Ovary (tissue), 10 donors: ENCODE measurements at regions of chr4 and their contacts with region 1.

Region 1: GRCh38 chr4:83284193-83285054 is at the start of gene COQ2:
- DNase-seq: peak; percentile 96 to 98 (median 97)
- H3K4me3 ChIP-seq: peak within 1 kb of the TSS; percentile 52
- H3K27ac ChIP-seq: peak within 1 kb of the TSS; percentile 94 to 98
- H3K4me1 ChIP-seq: no peaks in the 10 kb centered on the region
- H3K27me3 ChIP-seq: no peaks in the 10 kb centered on the region
- CTCF ChIP-seq: peak; percentile 44 to 90 (median 84)
- EP300 ChIP-seq: no peak
- POLR2A ChIP-seq: peak; percentile 75
- total RNA-seq, gene COQ2: 8.4 to 12.3 (median 9.5) TPM

Region 2: GRCh38 chr4:82462415-82462831 is 822.0 kb before region 1 on chr4:
- intact Hi-C with region 1: loop called in 1 of 4 experiments (anchors 10 kb)
- DNase-seq: peak; percentile 88 to 96 (median 94)
- H3K4me3 ChIP-seq: no peak overlapping the region
- H3K27ac ChIP-seq: peak overlapping the region in 1 of 2 donors; percentile 36
- H3K4me1 ChIP-seq: no peaks in the 10 kb centered on the region
- H3K27me3 ChIP-seq: no peaks in the 10 kb centered on the region
- CTCF ChIP-seq: peak; percentile 50 to 75 (median 70)
- EP300 ChIP-seq: no peak
- POLR2A ChIP-seq: no peak

Region 3: GRCh38 chr4:83034630-83035494 is 249.6 kb before region 1 on chr4 and contains the start of gene COPS4:
- intact Hi-C with region 1: loop called in 1 of 4 experiments (anchors 10 kb)
- DNase-seq: peak; percentile 93 to 97 (median 95)
- H3K4me3 ChIP-seq: peak within 1 kb of the TSS; percentile 87
- H3K27ac ChIP-seq: peak within 1 kb of the TSS; percentile 56 to 85
- H3K4me1 ChIP-seq: peaks cover 5% of the 10 kb centered on the region
- H3K27me3 ChIP-seq: no peaks in the 10 kb centered on the region
- CTCF ChIP-seq: peak; percentile 62 to 69 (median 67)
- EP300 ChIP-seq: no peak
- POLR2A ChIP-seq: peak; percentile 5
- total RNA-seq, gene COPS4: 30.7 to 43.2 (median 34.1) TPM

Region 4: DNA sequence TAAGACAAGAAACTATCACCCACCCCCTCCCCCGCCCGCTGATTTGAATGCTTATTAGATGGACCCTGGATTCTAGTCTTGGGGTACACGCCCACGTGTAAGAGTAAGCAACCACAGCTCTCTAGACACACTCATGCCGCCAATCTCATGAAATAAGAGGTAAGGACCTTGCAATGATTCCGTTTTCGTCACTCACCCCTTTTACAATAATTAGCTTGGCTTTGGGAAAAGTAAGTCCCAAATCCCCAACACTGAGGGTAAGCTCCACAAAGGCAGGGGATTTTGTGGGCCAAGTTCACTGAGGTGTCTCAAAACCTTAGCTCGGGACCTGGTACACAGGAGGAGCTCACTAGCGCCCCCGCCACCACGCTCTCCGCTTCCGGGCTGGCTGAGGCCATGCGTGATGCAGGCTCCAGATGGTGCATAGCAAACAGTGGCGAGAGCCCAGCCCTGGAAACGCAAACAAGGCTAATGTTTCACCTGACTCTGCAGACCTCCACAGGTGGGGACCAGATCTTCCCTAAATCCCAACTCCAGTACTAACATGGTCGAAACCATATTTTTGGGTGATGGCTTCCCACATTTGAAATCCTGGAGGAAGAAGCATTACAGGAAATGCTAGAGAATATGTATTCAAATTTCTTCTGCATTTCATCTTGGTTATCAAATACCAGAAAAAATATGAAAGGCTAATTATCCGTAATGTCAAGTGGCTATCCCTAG is 174.0 kb before region 1 on chr4:
- intact Hi-C with region 1: no loop called
- DNase-seq: peak; percentile 70 to 85 (median 72)
- H3K4me3 ChIP-seq: peak overlapping the region; percentile 35
- H3K27ac ChIP-seq: no peak overlapping the region
- H3K4me1 ChIP-seq: no peaks in the 10 kb centered on the region
- H3K27me3 ChIP-seq: no peaks in the 10 kb centered on the region
- CTCF ChIP-seq: peak in 1 of 3 donors; percentile 27
- EP300 ChIP-seq: no peak
- POLR2A ChIP-seq: no peak

Region 5: DNA sequence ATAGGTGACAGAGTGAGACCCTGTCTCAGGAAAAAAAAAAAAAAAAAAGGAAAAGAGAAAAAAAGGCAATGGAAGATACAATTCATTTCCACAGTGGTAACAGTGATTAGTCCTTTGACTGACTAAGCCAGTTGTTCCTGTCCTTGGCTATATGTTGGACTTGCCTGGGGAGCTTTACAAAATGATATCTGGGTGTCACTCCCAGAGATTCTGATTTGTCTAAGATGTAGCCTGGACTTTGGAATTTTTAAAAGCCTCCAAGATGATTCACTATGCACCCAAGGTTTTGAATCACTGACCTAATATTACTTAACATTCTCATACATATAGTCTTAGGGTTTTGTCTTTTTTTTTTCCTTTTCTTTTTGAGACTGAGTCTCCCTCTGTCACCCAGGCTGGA is 154.3 kb after region 1 on chr4:
- intact Hi-C with region 1: loop called in 1 of 4 experiments (anchors 10 kb)
- DNase-seq: no peak
- H3K4me3 ChIP-seq: no peak overlapping the region
- H3K27ac ChIP-seq: no peak overlapping the region
- H3K4me1 ChIP-seq: no peaks in the 10 kb centered on the region
- H3K27me3 ChIP-seq: no peaks in the 10 kb centered on the region
- CTCF ChIP-seq: no peak
- EP300 ChIP-seq: no peak
- POLR2A ChIP-seq: no peak

Region 6: GRCh38 chr4:83455281-83456129 is 171.1 kb after region 1 on chr4 and contains the starts of genes HELQ and MRPS18C:
- intact Hi-C with region 1: loop called in 1 of 4 experiments (anchors 10 kb)
- DNase-seq: peak; percentile 95 to 98 (median 97)
- H3K4me3 ChIP-seq: peak within 1 kb of the TSS; percentile 84
- H3K27ac ChIP-seq: peak within 1 kb of the TSS; percentile 96 to 97
- H3K4me1 ChIP-seq: peaks cover 7% of the 10 kb centered on the region
- H3K27me3 ChIP-seq: no peaks in the 10 kb centered on the region
- CTCF ChIP-seq: peak in 2 of 3 donors; percentile 32 to 40
- EP300 ChIP-seq: no peak
- POLR2A ChIP-seq: peak; percentile 89
- total RNA-seq, gene HELQ: 17.2 to 30.8 (median 22.7) TPM
- total RNA-seq, gene MRPS18C: 13.0 to 47.5 (median 35.7) TPM

Region 7: DNA sequence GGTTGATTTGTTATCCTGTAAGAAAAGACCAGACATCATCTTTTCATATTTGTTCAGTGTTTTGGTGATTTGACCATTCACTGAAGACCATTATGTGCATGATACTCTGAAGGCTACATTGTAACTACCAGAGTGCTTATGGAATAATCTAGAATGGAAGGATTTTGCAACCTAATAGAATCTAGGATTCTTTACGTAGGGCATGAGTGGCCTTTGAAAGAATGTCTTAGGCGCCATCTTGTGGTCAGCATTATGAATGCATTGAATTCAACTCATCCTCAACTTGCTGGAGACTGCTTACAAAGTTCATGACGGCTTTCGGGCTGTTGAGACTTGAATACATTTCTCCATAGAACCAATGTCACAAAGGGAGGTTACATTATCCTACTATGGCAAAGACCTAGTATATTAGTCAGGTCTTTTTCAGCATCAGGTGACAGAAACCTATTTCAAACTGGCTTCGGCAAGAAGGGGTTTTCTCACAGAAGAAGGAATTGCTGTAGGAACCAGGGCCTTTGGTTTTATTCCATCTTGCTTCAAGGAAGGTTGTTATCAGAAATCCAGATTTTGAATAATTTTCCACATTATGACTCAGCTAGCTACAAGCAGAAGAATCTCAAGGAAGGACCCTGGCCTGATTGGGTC is 355.5 kb after region 1 on chr4:
- intact Hi-C with region 1: loop called in 1 of 4 experiments (anchors 5 kb)
- DNase-seq: peak in 3 of 5 donors; percentile 23 to 71 (median 44)
- H3K4me3 ChIP-seq: no peak overlapping the region
- H3K27ac ChIP-seq: no peak overlapping the region
- H3K4me1 ChIP-seq: peaks cover 3% of the 10 kb centered on the region
- H3K27me3 ChIP-seq: no peaks in the 10 kb centered on the region
- CTCF ChIP-seq: peak; percentile 49 to 81 (median 78)
- EP300 ChIP-seq: no peak
- POLR2A ChIP-seq: no peak